ENCODE measurements at regions of chr12 and their contacts with region 1.

Region 1: DNA sequence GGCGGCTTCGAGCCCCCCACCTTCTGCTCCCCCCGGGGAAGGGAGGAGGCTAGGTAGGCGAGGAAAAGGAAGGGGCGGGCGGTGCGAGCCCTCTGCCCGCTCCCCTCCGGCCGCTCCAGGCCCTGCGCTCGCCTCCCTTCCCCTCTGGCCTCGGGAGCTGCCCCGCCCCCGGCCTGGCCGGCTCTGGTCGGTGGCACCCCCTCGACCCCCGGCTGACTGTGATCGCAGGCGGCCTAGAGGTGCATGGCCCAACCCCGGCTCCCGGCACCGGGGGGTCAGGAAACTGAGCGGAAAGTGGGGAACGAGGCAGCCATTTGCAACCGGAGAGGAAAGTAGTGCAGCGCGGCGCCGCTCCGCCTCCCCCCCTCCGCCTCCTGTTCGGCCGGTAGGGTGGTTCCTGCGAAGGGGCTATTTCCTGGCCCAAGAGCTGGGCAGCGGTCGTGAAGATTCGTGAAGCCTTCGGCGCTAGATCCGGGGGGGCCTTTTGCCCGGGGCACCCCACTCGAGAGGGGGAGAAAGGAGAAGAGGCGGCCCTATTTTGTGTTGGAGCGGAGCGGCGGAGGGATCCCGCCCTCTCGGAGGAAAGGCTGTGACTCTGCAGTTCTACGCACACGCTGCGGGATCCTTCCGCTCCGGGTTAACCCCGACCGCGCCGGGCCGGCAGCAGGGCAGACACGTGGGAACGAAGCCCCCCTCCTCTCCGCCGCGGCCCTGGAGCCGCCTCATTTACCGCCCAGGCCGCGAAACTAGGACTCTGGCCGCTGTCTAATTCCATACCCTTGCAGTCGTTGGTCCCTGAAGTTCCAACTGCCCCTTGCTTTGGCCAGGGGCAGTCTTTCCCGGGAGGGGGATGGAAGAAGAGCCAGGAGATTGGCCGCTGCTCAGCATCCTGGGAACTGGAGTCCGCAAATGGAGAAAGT is at the start of gene KMT2D:
- DNase-seq: peak; percentile 59
- ATAC-seq: peak; percentile 78
- H3K4me3 ChIP-seq: peak within 1 kb of the TSS; percentile 99
- H3K27ac ChIP-seq: peak within 1 kb of the TSS; percentile 99
- H3K4me1 ChIP-seq: peaks cover 6% of the 10 kb centered on the region
- H3K27me3 ChIP-seq: no peaks in the 10 kb centered on the region
- CTCF ChIP-seq: peak in 1 of 3 experiments; percentile 28; a peak in 1 of 6 replicates
- EP300 ChIP-seq: peak in 1 of 2 experiments; percentile 66; a peak in 1 of 4 replicates
- POLR2A ChIP-seq: peak; percentile 80
- RAD21 ChIP-seq: no peak
- polyA plus RNA-seq, gene KMT2D: 0.51 to 1.2 TPM

Region 2: DNA sequence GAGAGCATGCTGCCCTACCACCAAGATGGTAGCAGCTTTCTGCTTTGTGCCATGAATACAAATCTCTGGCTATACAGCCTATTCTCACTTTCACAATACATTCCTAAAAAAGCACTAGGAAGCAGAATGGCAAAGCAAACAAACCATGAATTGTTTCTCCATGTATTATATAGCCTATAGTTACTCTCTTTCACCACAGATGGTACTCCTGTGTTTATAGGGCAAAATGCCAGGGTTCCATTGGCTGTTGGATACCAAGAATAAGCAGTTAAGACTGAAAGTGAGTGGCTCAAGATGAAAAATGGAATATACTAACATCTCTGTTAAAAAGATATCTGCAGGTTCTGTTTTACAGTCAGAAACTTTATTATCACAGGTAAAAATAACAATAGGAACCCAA is 114.3 kb before region 1 on chr12:
- CTCF ChIA-PET with region 1: no interaction called
- POLR2A ChIA-PET with region 1: no interaction called
- RAD21 ChIA-PET with region 1: no interaction called
- SMC1A ChIA-PET with region 1: no interaction called
- in situ Hi-C with region 1: no loop called
- intact Hi-C with region 1: no loop called
- DNase-seq: no peak
- ATAC-seq: no peak
- H3K4me3 ChIP-seq: no peak overlapping the region
- H3K27ac ChIP-seq: no peak overlapping the region
- H3K4me1 ChIP-seq: no peaks in the 10 kb centered on the region; the same call in 1 of the 2 replicates
- H3K27me3 ChIP-seq: no peaks in the 10 kb centered on the region
- CTCF ChIP-seq: no peak
- EP300 ChIP-seq: no peak
- POLR2A ChIP-seq: no peak
- RAD21 ChIP-seq: no peak

Region 3: DNA sequence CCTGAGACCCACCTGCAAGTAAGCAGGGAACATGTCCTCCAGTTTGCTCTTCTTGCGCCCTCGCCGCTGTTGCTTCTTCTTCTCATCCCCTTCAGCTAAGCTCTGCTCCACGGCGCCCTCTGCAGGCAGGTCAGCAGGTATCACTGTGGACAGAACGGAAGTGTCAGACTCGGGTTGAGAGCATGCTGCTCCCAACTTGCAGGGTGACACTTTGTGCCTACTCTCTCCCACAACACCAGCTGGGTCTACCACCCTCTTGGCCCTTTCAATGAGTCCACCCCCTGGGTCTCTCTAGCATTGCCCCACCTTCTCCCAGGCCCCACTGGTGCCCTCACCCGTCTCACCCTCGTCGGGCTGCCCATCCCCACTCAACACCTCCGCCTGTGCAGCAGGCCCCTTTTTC is 16.6 kb before region 1 on chr12:
- CTCF ChIA-PET with region 1: interaction called, 13 read pairs
- POLR2A ChIA-PET with region 1: no interaction called
- RAD21 ChIA-PET with region 1: interaction called, 3 read pairs
- SMC1A ChIA-PET with region 1: no interaction called
- in situ Hi-C with region 1: no loop called
- intact Hi-C with region 1: no loop called
- DNase-seq: no peak
- ATAC-seq: peak; percentile 87
- H3K4me3 ChIP-seq: no peak overlapping the region
- H3K27ac ChIP-seq: no peak overlapping the region
- H3K4me1 ChIP-seq: no peaks in the 10 kb centered on the region
- H3K27me3 ChIP-seq: no peaks in the 10 kb centered on the region
- CTCF ChIP-seq: peak; percentile 60 to 82 (median 77)
- EP300 ChIP-seq: no peak
- POLR2A ChIP-seq: no peak
- RAD21 ChIP-seq: peak; percentile 38

Region 4: GRCh38 chr12:49079793-49080192 is 19.3 kb after region 1 on chr12:
- CTCF ChIA-PET with region 1: interaction called, 254 read pairs
- POLR2A ChIA-PET with region 1: no interaction called
- RAD21 ChIA-PET with region 1: no interaction called
- SMC1A ChIA-PET with region 1: interaction called, 82 read pairs
- in situ Hi-C with region 1: no loop called
- intact Hi-C with region 1: no loop called
- DNase-seq: no peak
- ATAC-seq: no peak
- H3K4me3 ChIP-seq: no peak overlapping the region
- H3K27ac ChIP-seq: no peak overlapping the region
- H3K4me1 ChIP-seq: no peaks in the 10 kb centered on the region
- H3K27me3 ChIP-seq: no peaks in the 10 kb centered on the region; a peak in 1 of 4 replicates
- CTCF ChIP-seq: no peak
- EP300 ChIP-seq: no peak
- POLR2A ChIP-seq: no peak
- RAD21 ChIP-seq: no peak

Region 5: DNA sequence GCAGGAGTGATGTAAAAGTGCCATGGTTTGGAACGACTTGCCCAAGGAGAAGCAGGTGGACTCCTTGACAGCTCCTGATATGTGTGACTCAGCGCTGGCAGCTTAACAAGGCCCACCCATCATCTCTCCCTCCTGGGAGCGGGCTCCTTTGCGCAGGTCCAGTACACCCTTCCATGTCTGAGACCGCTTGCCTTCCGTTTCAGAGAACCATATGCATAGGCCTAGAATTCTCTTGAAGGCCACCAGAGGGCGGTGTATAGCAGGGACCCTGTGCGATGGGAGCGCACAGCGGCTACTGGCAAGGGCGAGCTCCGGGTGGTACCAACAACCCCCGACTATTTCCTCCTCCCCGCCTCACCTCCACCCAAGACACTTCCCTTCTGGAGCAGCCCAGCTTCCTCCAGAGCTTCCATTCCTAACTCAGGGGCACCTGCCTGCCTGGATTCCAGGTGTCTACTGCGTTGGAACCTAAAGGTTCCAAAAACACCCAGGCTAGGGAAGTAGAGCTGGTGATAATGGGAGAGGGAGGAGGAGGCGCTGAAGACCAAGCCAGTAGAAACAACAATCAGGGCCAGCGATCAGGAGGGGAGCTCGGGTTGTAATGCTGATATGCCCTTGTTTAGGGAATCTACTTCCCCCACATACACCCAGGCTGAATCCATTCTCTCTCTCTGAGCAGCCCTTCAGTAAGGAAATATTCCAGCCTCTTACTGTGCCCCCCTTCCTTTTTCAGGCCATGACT is 27.9 kb after region 1 on chr12:
- CTCF ChIA-PET with region 1: interaction called, 254 read pairs
- POLR2A ChIA-PET with region 1: interaction called, 4 read pairs
- RAD21 ChIA-PET with region 1: interaction called, 66 read pairs
- SMC1A ChIA-PET with region 1: interaction called, 82 read pairs
- in situ Hi-C with region 1: no loop called
- intact Hi-C with region 1: loop called (anchors 2 kb)
- DNase-seq: peak; percentile 44
- ATAC-seq: peak; percentile 96
- H3K4me3 ChIP-seq: 0 out of 2 replicates have a peak overlapping the region, but pooled peaks have one; percentile 5
- H3K27ac ChIP-seq: no peak overlapping the region
- H3K4me1 ChIP-seq: peaks cover 3% of the 10 kb centered on the region; the same call in 1 of the 2 replicates
- H3K27me3 ChIP-seq: peaks cover 27 to 35% of the 10 kb centered on the region in 2 experiments; a peak in 3 of 4 replicates
- CTCF ChIP-seq: peak; percentile 92 to 95 (median 94)
- EP300 ChIP-seq: no peak
- POLR2A ChIP-seq: peak; percentile 31; the same call in 1 of the 2 replicates
- RAD21 ChIP-seq: peak; percentile 76

Region 6: GRCh38 chr12:49098035-49098451 is 37.5 kb after region 1 on chr12:
- CTCF ChIA-PET with region 1: interaction called, 244 read pairs
- POLR2A ChIA-PET with region 1: interaction called, 7 read pairs
- RAD21 ChIA-PET with region 1: interaction called, 66 read pairs
- SMC1A ChIA-PET with region 1: interaction called, 64 read pairs
- in situ Hi-C with region 1: no loop called
- intact Hi-C with region 1: loop called (anchors 1 kb)
- DNase-seq: no peak
- ATAC-seq: peak; percentile 80
- H3K4me3 ChIP-seq: no peak overlapping the region
- H3K27ac ChIP-seq: no peak overlapping the region
- H3K4me1 ChIP-seq: no peaks in the 10 kb centered on the region
- H3K27me3 ChIP-seq: peaks cover 6 to 10% of the 10 kb centered on the region in 2 experiments
- CTCF ChIP-seq: peak; percentile 76 to 89 (median 84)
- EP300 ChIP-seq: no peak
- POLR2A ChIP-seq: no peak
- RAD21 ChIP-seq: peak; percentile 55

Region 7: DNA sequence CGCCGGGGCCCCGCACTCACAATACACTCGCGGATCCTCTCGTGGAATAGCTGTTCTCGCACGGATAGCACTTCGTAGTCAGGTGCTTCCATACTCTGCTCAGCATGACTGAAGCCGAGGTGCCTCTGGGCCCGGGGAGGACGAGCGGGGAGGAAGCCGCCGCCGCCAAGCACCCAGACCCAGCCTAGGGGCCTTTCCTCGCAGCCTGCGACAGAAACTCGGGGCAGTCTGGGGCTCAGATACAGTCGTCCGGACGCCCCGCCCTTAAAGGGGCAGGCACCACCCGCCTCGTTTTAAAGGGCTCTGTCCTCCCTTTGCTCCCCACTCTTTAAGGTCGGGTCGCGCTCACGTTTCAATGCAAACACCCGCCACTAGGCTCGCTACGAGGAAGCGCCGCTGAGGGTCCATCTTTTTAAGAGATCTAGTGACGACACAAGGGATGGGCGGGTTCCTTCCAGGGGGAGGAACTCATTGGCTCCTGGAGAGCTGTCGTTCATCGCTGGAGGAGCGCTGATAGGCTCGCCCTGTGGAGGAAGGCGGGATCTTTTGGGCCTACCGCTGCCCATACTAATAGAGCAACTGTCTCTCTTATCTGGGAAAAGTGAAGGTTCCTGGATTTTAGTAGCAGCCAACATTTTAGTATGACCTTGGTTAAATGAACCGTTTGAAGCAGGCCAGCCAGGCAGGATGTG is 50.1 kb after region 1 on chr12 and contains the start of gene LMBR1L:
- CTCF ChIA-PET with region 1: interaction called, 15 read pairs
- POLR2A ChIA-PET with region 1: interaction called, 6 read pairs
- RAD21 ChIA-PET with region 1: interaction called, 3 read pairs
- SMC1A ChIA-PET with region 1: interaction called, 5 read pairs
- in situ Hi-C with region 1: no loop called
- intact Hi-C with region 1: loop called (anchors 5 kb)
- DNase-seq: peak; percentile 93
- ATAC-seq: peak; percentile 98
- H3K4me3 ChIP-seq: peak within 1 kb of the TSS; percentile 87
- H3K27ac ChIP-seq: peak within 1 kb of the TSS; percentile 70
- H3K4me1 ChIP-seq: peaks cover 9% of the 10 kb centered on the region
- H3K27me3 ChIP-seq: no peaks in the 10 kb centered on the region
- CTCF ChIP-seq: peak; percentile 36 to 60 (median 50); a peak in 5 of 6 replicates
- EP300 ChIP-seq: no peak
- POLR2A ChIP-seq: peak; percentile 91
- RAD21 ChIP-seq: 0 out of 2 replicates have a peak, but pooled peaks have one; percentile 32
- polyA plus RNA-seq, gene LMBR1L: 2.1 to 2.8 TPM

Region 8: GRCh38 chr12:49121047-49121696 is 60.7 kb after region 1 on chr12:
- CTCF ChIA-PET with region 1: interaction called, 12 read pairs
- POLR2A ChIA-PET with region 1: interaction called, 4 read pairs
- RAD21 ChIA-PET with region 1: interaction called, 4 read pairs
- SMC1A ChIA-PET with region 1: interaction called, 3 read pairs
- in situ Hi-C with region 1: no loop called
- intact Hi-C with region 1: no loop called
- DNase-seq: no peak
- ATAC-seq: peak; percentile 52
- H3K4me3 ChIP-seq: no peak overlapping the region
- H3K27ac ChIP-seq: no peak overlapping the region
- H3K4me1 ChIP-seq: no peaks in the 10 kb centered on the region
- H3K27me3 ChIP-seq: no peaks in the 10 kb centered on the region
- CTCF ChIP-seq: peak; percentile 25 to 61 (median 36); a peak in 4 of 6 replicates
- EP300 ChIP-seq: no peak
- POLR2A ChIP-seq: no peak
- RAD21 ChIP-seq: peak; percentile 49